ENCODE measurements at regions of chr14 and their contacts with region 1.

Region 1: DNA sequence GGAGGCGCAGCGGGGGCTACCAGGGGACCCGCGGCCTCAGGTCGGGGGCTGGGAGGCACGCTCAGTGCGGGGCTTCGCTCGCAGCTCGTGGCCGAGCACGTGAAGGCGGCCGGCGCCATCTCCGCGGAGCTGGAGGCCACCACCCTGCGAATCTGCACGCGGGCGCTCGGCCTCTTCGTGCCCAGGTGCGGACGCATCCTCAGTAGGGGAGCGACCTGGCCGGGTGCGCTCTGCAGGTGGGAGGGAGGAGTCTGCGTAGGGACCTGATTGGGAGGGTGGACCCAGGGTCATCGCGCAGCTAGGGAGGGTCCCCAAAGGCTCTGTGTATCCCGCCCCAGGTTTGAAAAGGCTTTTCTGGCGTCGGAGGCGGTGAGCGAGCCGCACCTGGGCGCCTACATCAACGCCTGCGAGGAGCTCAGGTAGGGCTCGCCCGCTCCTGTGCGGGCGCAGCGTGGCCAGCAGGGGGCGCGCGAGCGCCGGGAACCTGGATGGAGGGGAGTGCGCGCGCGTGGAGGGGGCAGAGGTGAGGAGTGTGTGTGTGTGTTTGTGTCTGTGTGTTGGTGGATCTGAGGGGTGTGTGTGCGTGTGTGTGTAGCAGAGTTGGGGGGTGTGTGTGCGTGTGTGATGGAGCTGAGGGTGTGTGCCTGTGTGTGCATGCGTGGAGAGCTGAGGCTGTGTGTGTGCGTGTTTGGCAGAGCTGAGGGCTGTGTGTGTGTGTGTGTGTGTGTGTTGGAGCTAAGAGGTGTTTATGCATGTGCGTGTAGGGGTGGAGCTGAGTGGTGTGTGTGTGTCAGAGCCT is 10.3 kb downstream of the EXOC3L4 start:
- DNase-seq: peak; percentile 74
- ATAC-seq: peak; percentile 80
- H3K4me3 Mint-ChIP-seq: no peak overlapping the region
- H3K27ac Mint-ChIP-seq: no peak overlapping the region
- H3K4me1 Mint-ChIP-seq: peaks cover 6% of the 10 kb centered on the region
- H3K27me3 Mint-ChIP-seq: peaks cover 22% of the 10 kb centered on the region
- CTCF ChIP-seq: peak; percentile 87

Region 2: GRCh38 chr14:102893452-102893851 is 211.4 kb before region 1 on chr14:
- CTCF ChIA-PET with region 1: no interaction called
- POLR2A ChIA-PET with region 1: no interaction called
- intact Hi-C with region 1: no loop called
- DNase-seq: no peak
- ATAC-seq: no peak
- H3K4me3 Mint-ChIP-seq: no peak overlapping the region
- H3K27ac Mint-ChIP-seq: no peak overlapping the region
- H3K4me1 Mint-ChIP-seq: peaks cover 4% of the 10 kb centered on the region
- H3K27me3 Mint-ChIP-seq: no peaks in the 10 kb centered on the region
- CTCF ChIP-seq: no peak

Region 3: DNA sequence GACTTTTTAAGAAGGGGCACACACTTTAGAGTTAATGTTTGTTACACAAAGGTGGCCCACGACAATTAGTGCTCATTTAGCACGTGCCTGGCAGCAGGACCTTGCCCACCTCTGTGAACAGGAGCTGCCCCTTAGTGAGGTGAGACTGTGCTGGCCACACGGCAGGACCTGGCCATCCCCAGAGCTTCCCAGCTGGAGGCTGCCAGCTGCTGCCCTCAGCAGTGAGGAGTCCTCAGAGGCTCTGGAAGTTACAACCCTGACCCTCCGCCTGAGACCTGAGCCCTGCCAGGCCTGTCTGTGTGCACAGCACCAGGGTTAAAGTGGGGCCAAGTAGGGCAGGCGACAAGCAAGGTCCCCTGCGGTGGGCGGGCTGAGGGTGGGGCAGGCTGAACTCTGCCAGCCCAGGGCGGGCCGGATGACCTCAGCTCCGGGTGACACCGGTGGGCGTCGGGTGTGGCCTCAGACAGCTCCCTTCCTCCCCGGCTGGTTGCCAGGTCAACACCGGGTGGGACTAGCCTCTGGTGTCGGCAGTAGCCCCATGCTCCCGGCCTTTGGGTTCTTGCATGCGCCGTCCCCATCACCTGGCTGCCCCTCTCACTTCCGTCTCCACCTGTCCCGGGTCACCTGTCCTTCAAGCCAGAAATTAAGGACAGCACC is 30.0 kb before region 1 on chr14:
- CTCF ChIA-PET with region 1: interaction called, 22 read pairs
- POLR2A ChIA-PET with region 1: no interaction called
- intact Hi-C with region 1: no loop called
- DNase-seq: peak; percentile 68
- ATAC-seq: peak; percentile 21
- H3K4me3 Mint-ChIP-seq: no peak overlapping the region
- H3K27ac Mint-ChIP-seq: no peak overlapping the region
- H3K4me1 Mint-ChIP-seq: no peaks in the 10 kb centered on the region
- H3K27me3 Mint-ChIP-seq: peaks cover 4% of the 10 kb centered on the region
- CTCF ChIP-seq: no peak

Region 4: GRCh38 chr14:103091041-103091882 is 13.6 kb before region 1 on chr14:
- CTCF ChIA-PET with region 1: interaction called, 47 read pairs
- POLR2A ChIA-PET with region 1: interaction called, 4 read pairs
- intact Hi-C with region 1: no loop called
- DNase-seq: peak; percentile 84
- ATAC-seq: peak; percentile 97
- H3K4me3 Mint-ChIP-seq: peak overlapping the region; percentile 43
- H3K27ac Mint-ChIP-seq: no peak overlapping the region
- H3K4me1 Mint-ChIP-seq: peaks cover 4% of the 10 kb centered on the region
- H3K27me3 Mint-ChIP-seq: peaks cover 5% of the 10 kb centered on the region
- CTCF ChIP-seq: peak; percentile 75

Region 5: GRCh38 chr14:103118019-103118662 is 13.3 kb after region 1 on chr14:
- CTCF ChIA-PET with region 1: interaction called, 21 read pairs
- POLR2A ChIA-PET with region 1: no interaction called
- intact Hi-C with region 1: no loop called
- DNase-seq: no peak
- ATAC-seq: no peak
- H3K4me3 Mint-ChIP-seq: no peak overlapping the region
- H3K27ac Mint-ChIP-seq: no peak overlapping the region
- H3K4me1 Mint-ChIP-seq: peaks cover 4% of the 10 kb centered on the region
- H3K27me3 Mint-ChIP-seq: peaks cover 18% of the 10 kb centered on the region
- CTCF ChIP-seq: no peak

Region 6: DNA sequence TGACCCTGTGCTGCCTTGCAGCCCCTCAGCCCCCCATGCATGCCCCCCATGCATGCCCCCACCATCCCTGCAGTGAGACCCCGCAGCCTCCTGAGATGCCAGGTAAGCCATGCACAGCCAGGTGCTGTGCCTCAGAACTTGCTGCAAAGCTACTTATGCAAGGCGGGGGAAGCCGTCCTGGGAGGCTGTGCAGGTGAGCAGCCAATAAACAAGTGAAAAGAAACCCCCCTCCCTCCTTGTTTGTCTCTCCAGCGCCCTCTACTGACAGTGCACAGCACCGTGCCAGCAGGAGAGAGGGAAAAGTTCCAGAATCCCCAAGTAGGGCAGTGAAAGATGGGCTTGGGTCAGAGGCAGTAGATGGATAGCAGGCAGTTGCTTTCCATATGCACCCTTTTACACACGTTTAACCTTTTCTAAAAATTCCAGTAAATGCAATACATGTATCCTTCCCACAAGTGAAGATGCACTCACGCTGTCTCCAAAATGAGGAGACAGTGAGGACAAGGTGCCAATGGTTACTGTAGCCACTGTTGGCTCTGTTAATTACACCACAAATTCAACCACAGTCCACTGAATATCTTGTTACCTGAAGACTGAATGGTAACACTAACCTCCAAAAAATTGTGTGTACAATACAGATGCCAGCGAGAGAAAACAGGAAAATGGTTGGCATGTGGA is 36.4 kb after region 1 on chr14:
- CTCF ChIA-PET with region 1: interaction called, 14 read pairs
- POLR2A ChIA-PET with region 1: no interaction called
- intact Hi-C with region 1: no loop called
- DNase-seq: peak; percentile 66
- ATAC-seq: peak; percentile 61
- H3K4me3 Mint-ChIP-seq: no peak overlapping the region
- H3K27ac Mint-ChIP-seq: no peak overlapping the region
- H3K4me1 Mint-ChIP-seq: no peaks in the 10 kb centered on the region
- H3K27me3 Mint-ChIP-seq: peaks cover 10% of the 10 kb centered on the region
- CTCF ChIP-seq: peak; percentile 73

Region 7: DNA sequence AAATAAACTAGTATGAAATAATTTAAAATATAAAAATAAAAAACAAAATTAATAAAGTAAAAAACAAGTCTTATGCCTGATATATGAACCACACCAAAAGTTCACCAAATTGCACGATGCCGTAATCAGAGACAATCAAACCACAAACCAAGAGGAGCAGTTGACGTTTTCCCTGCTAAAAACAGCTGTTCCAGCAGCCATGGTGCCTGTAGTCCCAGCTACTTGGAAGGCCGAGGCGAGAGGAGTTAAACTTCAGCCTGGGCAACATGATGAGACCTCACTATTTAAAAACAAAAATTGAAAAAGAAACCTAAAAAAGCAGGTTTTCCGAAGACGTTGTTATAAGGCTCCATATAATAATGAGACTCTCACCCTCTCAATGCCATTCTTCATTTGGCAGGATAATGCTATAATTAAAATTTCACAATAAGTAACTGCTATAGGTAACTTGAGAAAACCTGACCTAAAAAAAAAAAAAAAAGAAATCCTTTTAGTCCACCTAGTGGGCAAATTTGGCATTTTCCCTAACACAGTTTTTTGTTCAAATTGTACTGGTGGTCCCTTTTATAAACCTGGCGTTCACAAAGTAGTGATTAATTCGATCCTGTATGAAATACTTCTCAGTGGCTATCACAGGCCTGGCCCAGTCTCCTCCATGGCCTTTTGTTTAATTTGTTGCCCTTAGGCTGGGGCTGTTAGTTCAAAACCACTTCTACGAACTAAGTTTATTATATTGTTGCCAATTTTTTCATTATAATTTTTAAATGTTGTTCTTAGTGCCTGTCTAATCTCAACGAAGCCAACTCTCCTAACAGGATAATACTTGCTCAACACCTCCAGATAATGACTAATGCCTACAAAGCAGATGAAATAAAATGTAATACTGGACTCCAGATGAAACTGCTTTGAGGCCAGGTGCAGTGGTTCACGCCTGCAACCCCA is 80.5 kb after region 1 on chr14:
- CTCF ChIA-PET with region 1: interaction called, 35 read pairs
- POLR2A ChIA-PET with region 1: no interaction called
- intact Hi-C with region 1: no loop called
- DNase-seq: no peak
- ATAC-seq: no peak
- H3K4me3 Mint-ChIP-seq: no peak overlapping the region
- H3K27ac Mint-ChIP-seq: no peak overlapping the region
- H3K4me1 Mint-ChIP-seq: peaks cover 8% of the 10 kb centered on the region
- H3K27me3 Mint-ChIP-seq: peaks cover 34% of the 10 kb centered on the region
- CTCF ChIP-seq: peak; percentile 82

Region 8: DNA sequence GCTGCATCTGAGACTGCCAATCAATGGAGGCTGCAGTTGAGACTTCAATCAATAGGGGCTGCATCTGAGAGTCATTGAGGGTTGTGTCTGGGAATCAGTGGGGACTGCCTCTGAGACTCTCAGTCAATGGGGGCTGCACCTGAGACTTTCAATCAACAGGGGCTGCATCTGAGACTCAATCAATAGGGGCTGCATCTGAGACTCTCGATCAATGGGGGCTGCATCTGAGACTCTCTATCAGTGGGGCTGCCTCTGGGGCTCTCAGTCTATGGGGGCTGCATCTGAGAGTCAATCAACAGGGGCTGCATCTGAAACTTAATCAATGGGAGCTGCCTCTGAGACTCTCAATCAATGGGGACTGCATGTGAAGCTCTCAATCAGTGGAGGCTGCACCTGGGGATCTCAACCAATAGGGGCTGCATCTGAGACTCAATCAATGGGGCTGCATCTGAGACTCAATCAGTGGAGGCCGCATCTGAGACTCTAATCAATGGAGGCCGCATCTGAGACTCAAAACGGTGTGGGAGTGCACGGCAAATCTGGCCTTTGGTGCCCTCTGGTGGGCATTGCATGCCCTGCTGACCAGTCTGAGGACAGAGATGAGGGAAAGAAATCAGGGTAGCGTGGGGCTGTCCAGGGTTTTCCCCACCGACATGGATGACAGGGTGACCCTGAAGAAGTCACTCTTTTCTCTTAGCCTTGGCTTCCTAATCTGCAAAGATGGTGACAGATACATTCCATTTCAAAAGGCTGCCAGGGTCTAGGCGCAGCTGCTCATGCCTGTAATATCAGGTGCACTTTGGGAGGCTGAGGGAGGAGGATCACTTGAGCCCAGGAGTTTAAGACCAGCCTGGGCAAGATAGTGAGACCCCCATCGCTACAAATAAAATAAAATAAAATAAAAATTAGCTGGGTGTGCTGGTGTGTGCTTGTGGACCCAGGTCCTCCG is 187.8 kb after region 1 on chr14:
- CTCF ChIA-PET with region 1: interaction called, 38 read pairs
- POLR2A ChIA-PET with region 1: no interaction called
- intact Hi-C with region 1: loop called (anchors 10 kb)
- DNase-seq: peak; percentile 87
- ATAC-seq: peak; percentile 98
- H3K4me3 Mint-ChIP-seq: no peak overlapping the region
- H3K27ac Mint-ChIP-seq: no peak overlapping the region
- H3K4me1 Mint-ChIP-seq: no peaks in the 10 kb centered on the region
- H3K27me3 Mint-ChIP-seq: peaks cover 7% of the 10 kb centered on the region
- CTCF ChIP-seq: peak; percentile 82

Measured in activated CD8-positive, alpha-beta T cell treated with anti-CD3 and anti-CD28 coated beads for 36 hours (primary cell).